ENCODE measurements at regions of chr5 and their contacts with region 1.

Region 1: DNA sequence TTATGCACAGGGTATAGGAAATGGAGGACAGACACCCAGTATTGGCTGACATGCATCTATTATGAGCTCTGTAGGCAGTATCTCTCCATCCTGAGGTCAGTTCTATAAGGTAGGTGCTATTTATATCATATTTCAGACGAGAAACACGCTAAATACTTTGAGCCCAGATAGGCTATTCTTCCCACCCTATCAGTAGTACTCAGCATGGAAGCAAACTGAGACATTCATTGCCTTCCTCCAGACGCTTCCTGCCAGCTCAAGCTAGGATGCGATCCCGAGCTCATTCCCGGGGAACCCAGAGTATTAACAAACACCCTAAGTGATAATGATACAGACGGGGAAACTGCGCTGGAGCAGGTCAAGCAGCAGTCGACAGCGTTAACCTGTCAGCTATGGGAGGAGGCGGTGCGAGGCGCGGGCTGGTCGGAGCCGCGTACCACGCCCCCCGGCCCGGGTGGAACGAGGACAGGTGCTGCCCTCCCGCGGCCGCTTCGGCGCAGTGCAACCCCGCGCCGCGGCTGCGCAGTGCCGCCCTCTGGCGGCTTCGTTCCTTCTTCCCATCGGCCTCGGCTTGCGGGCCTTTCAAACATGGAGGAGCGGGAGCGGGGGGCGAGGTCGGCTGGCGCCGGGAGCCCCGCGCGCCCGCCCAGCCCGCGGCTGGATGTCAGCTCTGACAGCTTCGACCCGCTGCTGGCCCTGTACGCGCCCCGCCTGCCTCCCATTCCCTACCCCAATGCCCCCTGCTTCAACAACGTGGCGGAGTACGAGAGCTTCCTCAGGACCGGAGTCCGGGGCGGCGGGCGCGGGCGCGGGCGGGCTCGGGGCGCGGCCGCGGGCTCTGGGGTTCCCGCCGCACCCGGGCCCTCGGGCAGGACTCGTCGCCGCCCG is at the start of gene LSM11:
- DNase-seq: peak; percentile 80 to 82
- ATAC-seq: peak; percentile 86 to 94
- H3K4me3 ChIP-seq: peak within 1 kb of the TSS; percentile 100
- H3K27ac ChIP-seq: peak within 1 kb of the TSS; percentile 84 to 95
- H3K4me1 ChIP-seq: peaks cover 13% of the 10 kb centered on the region; the same call in 2 of the 3 replicates
- CTCF ChIP-seq: peak; percentile 99
- EP300 ChIP-seq: no peak
- POLR2A ChIP-seq: no peak
- RAD21 ChIP-seq: peak; percentile 68 to 91
- polyA plus RNA-seq, gene LSM11: 3.7 and 4.1 TPM in 2 replicates

Region 2: GRCh38 chr5:157219491-157220271 is 523.7 kb before region 1 on chr5:
- CTCF ChIA-PET with region 1: no interaction called
- POLR2A ChIA-PET with region 1: no interaction called
- DNase-seq: no peak
- ATAC-seq: no peak
- H3K4me3 ChIP-seq: no peak overlapping the region
- H3K27ac ChIP-seq: no peak overlapping the region
- H3K4me1 ChIP-seq: no peaks in the 10 kb centered on the region
- CTCF ChIP-seq: no peak
- EP300 ChIP-seq: no peak
- POLR2A ChIP-seq: no peak
- RAD21 ChIP-seq: no peak

Region 3: DNA sequence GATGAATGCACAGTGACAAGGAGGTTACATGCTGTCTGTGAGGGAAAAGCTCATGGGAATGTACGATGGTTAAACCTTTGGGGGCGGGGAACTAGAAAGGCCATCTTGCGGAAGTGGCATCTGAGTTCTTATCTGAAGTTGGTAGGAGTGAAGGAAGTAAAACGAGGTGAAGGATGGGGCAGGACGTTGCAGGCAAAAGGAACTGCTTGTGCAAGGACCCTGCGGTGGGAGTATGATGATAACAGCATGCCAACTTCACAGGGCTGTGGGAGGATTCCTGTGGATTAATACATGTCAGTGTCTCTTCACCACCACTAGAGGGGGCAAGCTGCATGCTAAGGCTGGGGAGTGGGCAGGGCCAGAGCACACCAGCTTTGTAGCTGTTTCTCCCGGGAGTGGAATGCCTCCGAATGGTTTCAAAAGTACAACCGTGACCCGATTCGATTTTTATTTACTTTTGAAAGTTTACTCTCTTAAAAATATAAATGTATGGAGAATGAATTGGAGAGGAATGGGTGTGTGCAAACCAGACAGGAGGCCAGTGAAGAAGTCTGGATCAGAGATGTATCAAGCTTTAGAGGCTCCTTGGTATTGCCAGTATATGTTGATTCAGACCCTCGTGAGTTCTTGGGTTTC is 415.0 kb before region 1 on chr5:
- CTCF ChIA-PET with region 1: interaction called, 19 read pairs
- POLR2A ChIA-PET with region 1: no interaction called
- DNase-seq: peak; percentile 77 to 89
- ATAC-seq: peak; percentile 97 to 100
- H3K4me3 ChIP-seq: no peak overlapping the region
- H3K27ac ChIP-seq: peak overlapping the region in 1 of 2 experiments; percentile 42; a peak in 1 of 6 replicates
- H3K4me1 ChIP-seq: no peaks in the 10 kb centered on the region
- CTCF ChIP-seq: peak; percentile 95
- EP300 ChIP-seq: no peak
- POLR2A ChIP-seq: no peak
- RAD21 ChIP-seq: peak; percentile 91 to 93

Region 4: GRCh38 chr5:157486221-157486681 is 257.2 kb before region 1 on chr5:
- CTCF ChIA-PET with region 1: interaction called, 10 read pairs
- POLR2A ChIA-PET with region 1: no interaction called
- DNase-seq: no peak
- ATAC-seq: no peak
- H3K4me3 ChIP-seq: no peak overlapping the region
- H3K27ac ChIP-seq: no peak overlapping the region
- H3K4me1 ChIP-seq: no peaks in the 10 kb centered on the region
- CTCF ChIP-seq: no peak
- EP300 ChIP-seq: no peak
- POLR2A ChIP-seq: no peak
- RAD21 ChIP-seq: no peak

Region 5: DNA sequence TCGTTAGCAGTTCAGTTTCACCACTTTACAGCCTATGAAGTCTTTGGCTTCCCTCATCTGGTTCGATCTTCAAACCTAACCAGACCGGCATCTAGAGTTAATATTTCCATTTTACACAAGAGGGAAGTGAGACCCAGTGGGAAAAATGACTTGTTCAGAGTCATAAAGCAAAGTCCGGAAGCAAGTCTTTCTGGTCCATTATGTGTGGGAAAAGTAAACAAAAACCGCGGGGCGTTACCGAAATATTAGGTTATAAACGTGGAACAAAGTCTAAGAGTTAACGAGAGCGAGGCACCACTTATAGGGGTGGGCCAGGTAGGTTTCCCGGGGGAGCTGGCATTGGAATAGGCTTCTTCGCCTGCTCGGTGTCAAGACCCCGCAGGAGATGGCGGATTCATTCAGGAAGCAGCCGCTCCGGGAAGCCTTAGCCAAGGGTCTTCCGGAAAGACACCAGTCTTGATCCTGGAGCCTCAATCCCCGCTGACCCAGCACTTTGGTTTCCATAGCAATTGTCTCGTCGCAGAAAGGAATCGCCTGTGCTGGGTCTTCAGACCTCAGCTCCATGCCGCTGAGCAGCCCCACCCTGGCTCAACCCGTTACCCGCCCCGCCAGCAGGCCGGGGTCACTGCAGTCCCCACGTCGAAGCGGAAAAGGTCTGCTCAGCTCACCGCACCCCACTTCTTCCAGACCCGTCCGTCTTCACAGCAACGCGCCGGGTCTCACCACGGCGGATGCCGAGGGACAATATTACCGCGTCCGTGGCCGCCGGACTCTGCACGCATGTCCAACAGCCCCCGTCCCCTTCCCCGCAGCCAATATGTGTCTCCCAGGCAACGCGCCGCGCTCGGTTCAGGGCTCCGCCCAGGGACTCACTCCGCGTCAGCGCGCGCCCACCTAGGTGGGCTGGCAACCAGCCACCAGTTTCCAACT is 72.5 kb before region 1 on chr5 and contains the start of gene C5orf52:
- CTCF ChIA-PET with region 1: interaction called, 56 read pairs
- POLR2A ChIA-PET with region 1: no interaction called
- DNase-seq: peak; percentile 18 to 35
- ATAC-seq: peak; percentile 15 to 16; a peak in 2 of 6 replicates
- H3K4me3 ChIP-seq: peak within 1 kb of the TSS; percentile 30
- H3K27ac ChIP-seq: peak within 1 kb of the TSS; percentile 45 to 62; a peak in 5 of 6 replicates
- H3K4me1 ChIP-seq: peaks cover 9% of the 10 kb centered on the region
- CTCF ChIP-seq: no peak
- EP300 ChIP-seq: no peak
- POLR2A ChIP-seq: no peak
- RAD21 ChIP-seq: no peak
- polyA plus RNA-seq, gene C5orf52: not detected in 2 replicates

Region 6: DNA sequence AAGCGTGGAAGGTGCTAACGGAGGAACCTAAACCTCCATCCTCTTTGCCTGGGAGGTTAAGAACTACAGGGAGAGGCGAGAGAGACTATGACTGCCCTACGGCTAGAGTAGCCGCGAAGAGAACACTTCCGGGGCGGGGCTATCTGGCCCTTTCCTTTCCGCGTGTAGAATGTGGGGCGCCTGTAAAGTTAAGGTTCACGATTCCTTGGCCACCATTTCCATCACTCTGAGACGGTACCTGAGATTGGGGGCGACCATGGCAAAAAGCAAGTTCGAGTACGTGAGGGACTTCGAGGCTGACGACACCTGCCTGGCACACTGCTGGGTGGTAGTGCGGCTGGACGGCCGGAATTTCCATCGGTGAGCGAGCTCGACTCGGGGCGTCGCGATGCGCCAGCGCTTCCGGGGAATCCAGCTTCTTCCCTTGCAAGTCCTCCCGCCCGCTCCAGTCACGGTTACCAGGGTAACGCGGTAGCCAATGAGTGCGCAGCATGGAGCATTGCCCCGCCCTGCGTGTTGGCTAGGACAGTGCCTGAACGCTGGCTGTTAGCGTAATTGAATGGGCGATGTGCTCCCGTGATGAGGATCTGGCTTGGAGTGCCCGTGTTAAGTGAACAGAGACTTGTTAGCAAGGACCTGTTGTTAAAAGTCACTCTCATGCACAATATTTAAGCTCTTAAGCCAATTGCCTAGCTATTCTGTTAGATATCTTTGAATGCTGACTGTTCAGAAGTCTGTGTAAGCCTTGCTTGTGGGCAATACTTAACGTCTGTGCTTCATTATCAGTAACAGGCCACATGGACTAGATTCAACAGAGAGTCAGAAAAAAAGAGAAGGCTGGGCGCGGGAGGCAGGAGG is 11.9 kb before region 1 on chr5 and contains the start of gene THG1L:
- CTCF ChIA-PET with region 1: interaction called, 61 read pairs
- POLR2A ChIA-PET with region 1: interaction called, 15 read pairs
- DNase-seq: peak; percentile 98 to 99
- ATAC-seq: peak; percentile 99 to 100
- H3K4me3 ChIP-seq: peak within 1 kb of the TSS; percentile 52
- H3K27ac ChIP-seq: peak within 1 kb of the TSS; percentile 83 to 96
- H3K4me1 ChIP-seq: peaks cover 9% of the 10 kb centered on the region; the same call in 1 of the 3 replicates
- CTCF ChIP-seq: no peak
- EP300 ChIP-seq: no peak
- POLR2A ChIP-seq: peak; percentile 88
- RAD21 ChIP-seq: no peak
- polyA plus RNA-seq, gene THG1L: 31.9 and 45.6 TPM in 2 replicates

Region 7: DNA sequence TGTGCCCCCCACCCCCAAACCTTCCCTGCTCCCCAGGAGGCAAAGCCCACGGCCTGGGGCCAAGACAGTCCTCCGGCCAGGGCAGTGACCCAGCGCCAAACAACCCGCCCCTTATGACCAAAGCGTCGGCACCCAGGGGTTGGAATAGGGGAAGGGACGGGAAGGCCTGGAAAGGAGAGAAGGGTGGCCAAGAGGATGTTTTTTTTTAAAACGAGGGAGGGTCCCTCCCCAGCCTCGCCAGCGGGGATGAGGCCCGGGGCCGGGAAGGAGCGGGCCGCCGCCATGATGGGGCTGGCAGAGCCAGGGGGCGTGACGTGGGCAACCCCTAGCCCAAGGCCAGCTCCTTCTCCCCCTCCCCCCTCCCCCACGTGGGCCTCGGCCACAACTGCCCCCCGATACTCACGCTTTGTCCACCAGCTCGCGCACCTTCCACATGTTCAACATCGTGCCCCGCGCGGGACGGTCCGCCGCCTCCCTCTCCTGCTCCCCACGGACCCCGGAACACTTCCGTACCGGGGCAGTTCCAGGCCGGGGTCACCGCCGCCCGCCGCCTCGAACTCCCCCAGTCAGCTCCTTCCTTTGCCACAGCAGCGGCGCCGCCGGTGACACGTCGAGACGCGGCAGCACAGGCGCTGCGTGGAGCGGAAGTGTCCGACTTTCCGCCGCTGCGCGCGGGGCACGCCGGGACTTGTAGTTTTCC is 115.3 kb after region 1 on chr5 and contains the start of gene CLINT1:
- CTCF ChIA-PET with region 1: no interaction called
- POLR2A ChIA-PET with region 1: no interaction called
- DNase-seq: peak; percentile 89 to 91
- ATAC-seq: peak; percentile 96 to 97
- H3K4me3 ChIP-seq: peak within 1 kb of the TSS; percentile 70
- H3K27ac ChIP-seq: peak within 1 kb of the TSS; percentile 96 to 97
- H3K4me1 ChIP-seq: peaks cover 29% of the 10 kb centered on the region; the same call in 2 of the 3 replicates
- CTCF ChIP-seq: no peak
- EP300 ChIP-seq: no peak
- POLR2A ChIP-seq: peak; percentile 69
- RAD21 ChIP-seq: no peak
- polyA plus RNA-seq, gene CLINT1: 185 and 240 TPM in 2 replicates

Region 8: DNA sequence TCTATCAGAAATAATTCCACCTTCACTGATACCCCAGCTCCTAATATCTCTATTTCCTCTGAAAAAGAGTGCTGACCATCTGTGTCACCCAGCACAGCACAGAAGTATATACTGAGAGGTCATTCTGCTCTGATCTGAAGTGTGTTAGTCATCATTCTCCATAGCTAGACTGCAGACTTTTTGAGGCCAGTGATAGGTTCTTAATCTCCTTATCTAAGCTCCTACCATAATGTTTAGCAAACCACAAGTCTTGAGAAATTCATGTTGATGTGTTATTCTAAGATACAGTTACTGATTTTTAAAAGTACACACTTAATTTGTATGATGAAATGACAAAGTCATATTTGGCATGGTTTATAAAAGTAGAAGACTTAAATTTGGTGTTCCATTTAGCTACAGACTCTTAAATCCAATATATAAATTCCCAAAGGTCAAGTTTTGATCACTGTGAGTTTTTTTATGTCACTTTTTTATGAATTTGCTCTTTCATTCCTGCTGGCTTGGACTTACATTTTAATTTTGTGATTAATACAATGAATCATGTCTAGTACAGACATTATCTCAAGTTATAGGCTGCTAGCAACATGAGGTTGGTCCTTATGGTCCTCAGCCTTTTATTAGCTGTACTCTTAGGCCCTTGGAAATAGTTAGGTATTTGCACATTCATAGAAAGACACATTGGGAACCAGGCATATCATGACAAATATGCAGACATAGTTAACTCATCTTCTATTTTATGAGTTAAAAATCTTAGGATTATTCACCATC is 975.5 kb after region 1 on chr5:
- CTCF ChIA-PET with region 1: no interaction called
- POLR2A ChIA-PET with region 1: no interaction called
- DNase-seq: no peak
- ATAC-seq: peak; percentile 66 to 71; a peak in 2 of 6 replicates
- H3K4me3 ChIP-seq: no peak overlapping the region
- H3K27ac ChIP-seq: no peak overlapping the region
- H3K4me1 ChIP-seq: peaks cover 7% of the 10 kb centered on the region; the same call in 1 of the 3 replicates
- CTCF ChIP-seq: no peak
- EP300 ChIP-seq: no peak
- POLR2A ChIP-seq: no peak
- RAD21 ChIP-seq: no peak